Colonic mucosa (tissue), 4 donors: ENCODE measurements at regions of chr3 and their contacts with region 1.

Region 1: DNA sequence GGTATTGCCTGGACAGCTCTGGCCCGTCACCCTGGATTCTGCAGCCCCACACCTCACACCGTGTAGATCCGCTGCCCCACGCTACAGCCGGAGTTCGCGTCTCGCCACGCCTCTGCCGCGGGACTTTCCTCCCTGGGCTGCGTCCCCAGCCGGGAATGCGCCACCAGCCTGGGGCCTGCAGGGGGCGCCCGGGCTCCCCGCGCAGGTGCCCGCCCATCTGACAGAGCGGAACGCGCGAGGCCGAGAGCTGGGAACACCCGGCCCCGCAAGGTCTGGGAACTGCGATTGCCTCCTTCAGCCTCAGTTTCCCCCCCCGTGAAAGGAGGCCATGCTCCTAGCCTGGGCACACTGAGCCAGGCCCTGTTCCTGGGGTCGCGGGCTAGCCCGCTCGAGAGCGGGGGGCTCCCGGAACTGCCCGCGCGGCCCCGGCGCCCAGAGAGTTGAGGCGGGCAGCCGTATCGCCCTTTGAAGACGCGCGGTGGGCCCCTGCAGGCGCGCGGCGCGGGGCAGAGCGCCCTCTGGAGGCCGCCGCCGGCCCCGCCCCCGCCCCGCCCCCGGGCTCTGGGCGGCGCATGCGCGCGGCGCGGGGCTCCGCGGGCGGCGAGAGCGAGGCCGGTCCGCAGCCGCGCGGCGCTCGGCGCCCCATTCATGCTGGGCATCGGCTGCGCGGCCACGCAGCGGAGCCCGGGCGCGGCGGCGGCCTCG is at the start of gene PLXNA1:
- DNase-seq: peak; percentile 83
- H3K4me3 ChIP-seq: peak within 1 kb of the TSS; percentile 93
- H3K27ac ChIP-seq: peak within 1 kb of the TSS; percentile 32
- H3K4me1 ChIP-seq: peaks cover 4% of the 10 kb centered on the region
- H3K27me3 ChIP-seq: no peaks in the 10 kb centered on the region
- CTCF ChIP-seq: peak; percentile 99
- total RNA-seq, gene PLXNA1: 16.0 to 19.3 TPM

Region 2: GRCh38 chr3:126752303-126752842 is 230.2 kb before region 1 on chr3:
- intact Hi-C with region 1: loop called (anchors 2 kb)
- DNase-seq: peak; percentile 69
- H3K4me3 ChIP-seq: no peak overlapping the region
- H3K27ac ChIP-seq: no peak overlapping the region
- H3K4me1 ChIP-seq: no peaks in the 10 kb centered on the region
- H3K27me3 ChIP-seq: no peaks in the 10 kb centered on the region
- CTCF ChIP-seq: peak; percentile 86

Region 3: DNA sequence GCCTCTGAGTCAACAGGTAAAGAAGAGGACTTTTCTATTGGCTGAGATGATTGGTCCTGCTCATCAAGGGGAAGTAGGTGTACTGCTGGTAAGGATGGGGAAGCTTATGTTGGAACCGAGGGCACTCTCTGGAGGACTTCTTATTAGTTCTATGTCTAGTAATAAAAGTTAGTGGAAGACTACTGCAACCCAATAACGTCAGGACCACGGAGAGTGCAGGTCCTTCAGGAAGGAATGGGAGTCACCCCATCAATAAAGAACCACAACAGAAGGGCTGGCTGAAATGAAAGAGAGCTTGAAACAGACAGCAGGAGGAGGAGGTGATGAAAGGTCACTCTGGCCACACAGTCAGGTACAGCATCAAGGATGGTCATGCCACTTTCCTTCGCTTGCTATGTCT is 141.5 kb after region 1 on chr3:
- intact Hi-C with region 1: no loop called
- DNase-seq: no peak
- H3K4me3 ChIP-seq: no peak overlapping the region
- H3K27ac ChIP-seq: no peak overlapping the region
- H3K4me1 ChIP-seq: no peaks in the 10 kb centered on the region
- H3K27me3 ChIP-seq: no peaks in the 10 kb centered on the region
- CTCF ChIP-seq: no peak

Region 4: DNA sequence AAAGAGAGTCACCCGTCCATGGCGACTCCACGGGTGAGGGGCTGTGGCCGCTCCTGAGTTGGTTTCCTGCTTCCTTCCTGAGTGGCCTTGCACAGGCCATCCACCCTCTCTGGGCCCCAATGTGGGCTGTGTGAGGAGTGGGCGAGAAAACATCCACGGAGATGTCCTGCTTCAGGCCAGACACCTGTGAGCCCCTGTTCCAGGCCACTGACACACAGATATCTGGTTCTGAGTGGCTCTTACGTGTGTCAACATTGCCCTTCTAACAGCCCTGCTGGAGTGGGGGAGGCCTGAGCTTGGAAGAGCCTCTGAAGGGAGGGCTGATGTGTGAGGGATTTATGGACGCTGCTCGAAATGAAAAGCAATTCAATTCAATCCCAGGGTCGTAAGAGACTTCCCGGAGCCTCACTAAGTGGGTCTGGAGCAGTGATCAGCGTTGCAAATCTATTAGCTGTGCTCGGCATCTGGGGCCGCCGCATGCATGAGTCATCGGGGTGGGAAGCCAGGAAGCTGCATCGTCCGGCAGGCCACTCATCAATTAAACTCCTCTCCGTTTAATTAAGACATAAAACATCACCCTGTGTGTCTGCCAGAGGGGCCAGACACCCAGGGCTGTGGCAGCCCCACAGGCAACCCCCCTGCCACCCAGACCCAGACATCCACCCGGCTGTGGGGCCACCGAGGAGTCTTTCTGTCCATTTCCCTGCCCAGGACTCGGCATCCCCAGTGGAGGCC is 190.3 kb after region 1 on chr3:
- intact Hi-C with region 1: loop called (anchors 5 kb)
- DNase-seq: no peak
- H3K4me3 ChIP-seq: no peak overlapping the region
- H3K27ac ChIP-seq: no peak overlapping the region
- H3K4me1 ChIP-seq: no peaks in the 10 kb centered on the region
- H3K27me3 ChIP-seq: no peaks in the 10 kb centered on the region
- CTCF ChIP-seq: no peak

Region 5: GRCh38 chr3:127544192-127544802 is 561.7 kb after region 1 on chr3:
- intact Hi-C with region 1: loop called (anchors 5 kb)
- DNase-seq: peak; percentile 80
- H3K4me3 ChIP-seq: no peak overlapping the region
- H3K27ac ChIP-seq: no peak overlapping the region
- H3K4me1 ChIP-seq: peaks cover 13% of the 10 kb centered on the region
- H3K27me3 ChIP-seq: no peaks in the 10 kb centered on the region
- CTCF ChIP-seq: peak; percentile 86